CD4-positive, alpha-beta memory T cell (primary cell): ENCODE measurements at regions of chr15 and their contacts with region 1.

Region 1: GRCh38 chr15:52039925-52040781 is 21.1 kb downstream of the MAPK6 start:
- DNase-seq: no peak
- H3K4me3 ChIP-seq: no peak overlapping the region
- H3K4me3 Mint-ChIP-seq: peak overlapping the region in 3 of 8 donors; percentile 5 to 33 (median 9)
- H3K27ac ChIP-seq: no peak overlapping the region
- H3K27ac Mint-ChIP-seq: peak overlapping the region; percentile 13 to 86 (median 77)
- H3K4me1 ChIP-seq: peaks cover 48% of the 10 kb centered on the region
- H3K4me1 Mint-ChIP-seq: peaks cover 44 to 67% (median 55%) of the 10 kb centered on the region in 4 donors
- H3K27me3 ChIP-seq: no peaks in the 10 kb centered on the region
- H3K27me3 Mint-ChIP-seq: no peaks in the 10 kb centered on the region

Region 2: GRCh38 chr15:52018693-52019387 is 21.3 kb before region 1 on chr15 and contains the start of gene MAPK6:
- CTCF ChIA-PET with region 1: interaction called, 12 read pairs
- POLR2A ChIA-PET with region 1: interaction called, 87 read pairs
- intact Hi-C with region 1: loop called (anchors 1 kb)
- DNase-seq: peak; percentile 91 to 94 (median 94)
- H3K4me3 ChIP-seq: peak within 1 kb of the TSS; percentile 59 to 78
- H3K4me3 Mint-ChIP-seq: peak within 1 kb of the TSS; percentile 94 to 99 (median 97)
- H3K27ac ChIP-seq: peak within 1 kb of the TSS; percentile 89
- H3K27ac Mint-ChIP-seq: peak within 1 kb of the TSS; percentile 98 to 99 (median 98)
- H3K4me1 ChIP-seq: peaks cover 41% of the 10 kb centered on the region
- H3K4me1 Mint-ChIP-seq: peaks cover 25 to 54% (median 38%) of the 10 kb centered on the region in 4 donors
- H3K27me3 ChIP-seq: no peaks in the 10 kb centered on the region
- H3K27me3 Mint-ChIP-seq: no peaks in the 10 kb centered on the region
- total RNA-seq, gene MAPK6: 18.2 to 24.0 TPM

Region 3: DNA sequence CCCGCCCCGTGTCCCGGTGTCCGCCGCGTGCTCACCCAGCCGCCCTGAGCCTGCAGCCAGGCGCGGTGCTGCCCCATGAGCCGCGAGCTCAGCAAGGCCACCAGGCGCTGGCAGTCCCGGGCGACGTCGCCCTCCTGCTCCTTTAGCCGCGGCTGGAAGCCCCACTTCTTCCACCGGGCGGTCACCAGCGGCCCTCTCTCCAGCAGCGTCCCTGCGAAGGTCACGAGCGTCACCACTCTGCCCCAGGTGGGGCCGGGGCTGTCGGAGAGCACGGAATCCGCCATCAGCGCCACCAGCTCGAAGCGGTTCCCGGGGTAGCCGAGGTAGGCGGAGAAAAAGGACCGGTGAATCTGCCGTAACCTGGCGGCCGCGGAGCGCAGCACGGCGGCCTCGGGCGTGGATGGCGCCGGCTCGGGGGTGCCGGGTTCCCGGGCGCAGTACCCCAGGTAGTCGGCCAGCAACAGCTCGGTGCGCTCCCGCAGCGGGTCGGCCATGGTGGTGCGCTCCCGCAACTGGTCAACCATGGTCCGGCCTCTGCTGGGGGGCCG is 72.1 kb after region 1 on chr15:
- CTCF ChIA-PET with region 1: no interaction called
- POLR2A ChIA-PET with region 1: no interaction called
- intact Hi-C with region 1: no loop called
- DNase-seq: peak; percentile 37 to 51 (median 50)
- H3K4me3 ChIP-seq: peak overlapping the region; percentile 10 to 38
- H3K4me3 Mint-ChIP-seq: peak overlapping the region; percentile 71 to 86 (median 78)
- H3K27ac ChIP-seq: no peak overlapping the region
- H3K27ac Mint-ChIP-seq: peak overlapping the region in 1 of 7 donors; percentile 57
- H3K4me1 ChIP-seq: peaks cover 18% of the 10 kb centered on the region
- H3K4me1 Mint-ChIP-seq: peaks cover 10 to 16% (median 12%) of the 10 kb centered on the region in 4 donors
- H3K27me3 ChIP-seq: no peaks in the 10 kb centered on the region
- H3K27me3 Mint-ChIP-seq: peaks cover 6 to 20% of the 10 kb centered on the region in 2 donors